ENCODE measurements at regions of chr2 and their contacts with region 1.

Region 1: GRCh38 chr2:172726172-172726735 is 9.4 kb upstream of the RAPGEF4 start:
- DNase-seq: no peak
- H3K4me3 ChIP-seq: no peak overlapping the region
- H3K27ac ChIP-seq: no peak overlapping the region
- H3K4me1 ChIP-seq: no peaks in the 10 kb centered on the region
- H3K27me3 ChIP-seq: no peaks in the 10 kb centered on the region
- CTCF ChIP-seq: no peak

Region 2: DNA sequence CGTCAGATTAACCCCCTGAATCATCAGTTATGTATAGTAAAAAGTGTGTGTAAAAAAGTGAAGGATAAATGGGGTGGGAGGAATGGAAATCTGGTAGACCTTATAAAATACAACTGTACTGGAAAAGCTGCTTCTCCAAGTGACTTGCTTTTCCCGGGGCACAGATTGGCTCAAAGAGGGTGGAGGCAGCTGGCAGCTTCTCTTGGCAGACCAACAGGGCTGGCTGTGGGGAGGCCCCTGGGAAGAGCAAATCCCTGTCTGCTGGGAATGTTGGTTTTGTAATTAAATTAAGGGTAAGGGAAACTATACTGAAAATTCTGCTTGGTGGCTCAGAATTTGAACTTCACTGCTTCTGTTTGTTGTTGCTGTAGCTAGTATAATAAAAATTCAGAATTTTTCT is 469.4 kb before region 1 on chr2:
- CTCF ChIA-PET with region 1: no interaction called
- dilution Hi-C with region 1: no loop called
- in situ Hi-C with region 1: no loop called
- intact Hi-C with region 1: no loop called
- DNase-seq: no peak
- H3K4me3 ChIP-seq: no peak overlapping the region
- H3K27ac ChIP-seq: no peak overlapping the region
- H3K4me1 ChIP-seq: peaks cover 42% of the 10 kb centered on the region
- H3K27me3 ChIP-seq: no peaks in the 10 kb centered on the region
- CTCF ChIP-seq: no peak

Region 3: GRCh38 chr2:172496160-172496608 is 230.1 kb before region 1 on chr2:
- CTCF ChIA-PET with region 1: no interaction called
- dilution Hi-C with region 1: loop called (anchors 10 kb)
- in situ Hi-C with region 1: loop called in 1 of 2 experiments (anchors 25 kb)
- intact Hi-C with region 1: no loop called
- DNase-seq: no peak
- H3K4me3 ChIP-seq: no peak overlapping the region
- H3K27ac ChIP-seq: no peak overlapping the region
- H3K4me1 ChIP-seq: no peaks in the 10 kb centered on the region
- H3K27me3 ChIP-seq: no peaks in the 10 kb centered on the region
- CTCF ChIP-seq: no peak

Measured in mammary epithelial cell (primary cell).